Activated CD8-positive, alpha-beta memory T cell treated with anti-CD3 and anti-CD28 coated beads, Interleukin-2, amount 10 ng/mL, durations not matched to agents 7 days and 5 days (primary cell): ENCODE measurements at regions of chr4 and their contacts with region 1.

Region 1: GRCh38 chr4:26410385-26411293 is 79.6 kb downstream of the CCKAR start:
- DNase-seq: no peak
- ATAC-seq: peak; percentile 82
- H3K4me3 Mint-ChIP-seq: no peak overlapping the region
- H3K27ac Mint-ChIP-seq: no peak overlapping the region
- H3K4me1 Mint-ChIP-seq: peaks cover 8% of the 10 kb centered on the region
- H3K27me3 Mint-ChIP-seq: no peaks in the 10 kb centered on the region

Region 2: GRCh38 chr4:26116092-26116491 is 294.5 kb before region 1 on chr4:
- CTCF ChIA-PET with region 1: no interaction called
- DNase-seq: no peak
- ATAC-seq: no peak
- H3K4me3 Mint-ChIP-seq: no peak overlapping the region
- H3K27ac Mint-ChIP-seq: no peak overlapping the region
- H3K4me1 Mint-ChIP-seq: no peaks in the 10 kb centered on the region
- H3K27me3 Mint-ChIP-seq: peaks cover 4% of the 10 kb centered on the region

Region 3: DNA sequence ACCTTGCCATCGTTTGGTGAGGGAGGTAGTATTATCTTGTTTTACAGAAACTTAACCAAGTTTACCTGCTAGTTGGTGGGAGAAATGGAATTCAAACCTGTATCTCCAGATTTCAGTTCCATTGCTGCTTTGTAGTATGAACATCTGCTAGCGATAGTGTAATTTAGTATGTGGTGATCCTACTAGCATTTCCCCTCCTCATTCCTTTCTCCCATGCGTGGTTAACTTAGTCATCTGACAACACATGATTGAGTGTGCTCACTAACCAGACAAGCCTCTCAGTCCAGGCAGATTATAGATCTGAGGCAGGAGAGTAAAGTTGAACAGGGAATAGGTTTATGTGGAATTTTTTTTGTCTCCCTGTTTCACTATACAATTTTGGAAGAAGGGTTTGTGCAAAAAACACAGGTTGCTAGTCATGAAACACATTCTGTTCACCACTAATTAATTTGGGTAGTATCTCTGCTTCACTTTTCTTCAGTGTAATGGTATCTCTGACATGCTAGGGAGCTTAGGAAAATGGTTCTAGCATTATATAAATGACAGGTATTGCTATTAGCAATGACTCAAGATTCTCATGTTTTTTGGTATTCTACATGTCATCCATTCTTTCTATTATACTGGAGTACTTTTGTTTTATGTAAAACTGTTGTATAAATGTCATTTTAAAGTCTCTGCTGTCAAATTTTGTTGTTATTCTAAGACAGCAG is 68.2 kb before region 1 on chr4:
- CTCF ChIA-PET with region 1: interaction called, 10 read pairs
- DNase-seq: no peak
- ATAC-seq: peak; percentile 49
- H3K4me3 Mint-ChIP-seq: no peak overlapping the region
- H3K27ac Mint-ChIP-seq: no peak overlapping the region
- H3K4me1 Mint-ChIP-seq: peaks cover 44% of the 10 kb centered on the region
- H3K27me3 Mint-ChIP-seq: no peaks in the 10 kb centered on the region

Region 4: GRCh38 chr4:26372525-26373172 is 38.0 kb before region 1 on chr4:
- CTCF ChIA-PET with region 1: interaction called, 12 read pairs
- DNase-seq: peak; percentile 77
- ATAC-seq: peak; percentile 89
- H3K4me3 Mint-ChIP-seq: peak overlapping the region; percentile 1
- H3K27ac Mint-ChIP-seq: peak overlapping the region; percentile 77
- H3K4me1 Mint-ChIP-seq: peaks cover 62% of the 10 kb centered on the region
- H3K27me3 Mint-ChIP-seq: no peaks in the 10 kb centered on the region

Region 5: DNA sequence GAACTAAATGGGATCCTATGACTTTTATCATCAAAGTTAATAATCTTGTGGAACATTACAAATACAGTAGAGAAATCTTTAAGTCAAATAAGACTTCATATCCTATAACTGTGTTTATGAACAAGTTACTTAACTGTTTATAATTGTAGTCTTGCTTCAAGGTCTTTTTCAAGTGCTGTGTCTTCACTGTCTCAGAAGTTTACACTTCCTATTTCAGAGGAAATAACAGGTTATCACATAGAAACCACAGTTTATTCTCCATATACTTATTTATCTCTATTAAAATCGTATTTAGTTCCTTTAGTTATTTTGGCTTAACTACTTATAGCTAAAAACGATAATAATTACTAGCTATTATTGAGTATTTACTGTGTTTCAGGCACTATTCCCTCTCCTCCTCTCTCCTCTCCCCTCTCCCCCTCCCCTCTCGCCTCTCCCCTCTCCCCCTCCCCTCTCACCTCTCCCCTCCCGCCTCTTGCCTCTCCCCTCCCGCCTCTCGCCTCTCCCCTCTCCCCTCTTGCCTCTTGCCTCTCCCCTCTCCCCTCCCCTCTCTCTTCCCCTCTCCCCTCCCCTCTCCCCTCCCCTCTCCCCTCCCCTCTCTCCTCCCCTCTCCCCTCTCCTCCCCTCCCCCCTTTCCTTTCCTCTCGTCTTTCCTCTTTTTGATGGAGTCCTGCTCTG is 26.1 kb before region 1 on chr4:
- CTCF ChIA-PET with region 1: no interaction called
- DNase-seq: no peak
- ATAC-seq: no peak
- H3K4me3 Mint-ChIP-seq: no peak overlapping the region
- H3K27ac Mint-ChIP-seq: no peak overlapping the region
- H3K4me1 Mint-ChIP-seq: peaks cover 26% of the 10 kb centered on the region
- H3K27me3 Mint-ChIP-seq: no peaks in the 10 kb centered on the region